ENCODE measurements at regions of chr7 and their contacts with region 1.

Region 1: DNA sequence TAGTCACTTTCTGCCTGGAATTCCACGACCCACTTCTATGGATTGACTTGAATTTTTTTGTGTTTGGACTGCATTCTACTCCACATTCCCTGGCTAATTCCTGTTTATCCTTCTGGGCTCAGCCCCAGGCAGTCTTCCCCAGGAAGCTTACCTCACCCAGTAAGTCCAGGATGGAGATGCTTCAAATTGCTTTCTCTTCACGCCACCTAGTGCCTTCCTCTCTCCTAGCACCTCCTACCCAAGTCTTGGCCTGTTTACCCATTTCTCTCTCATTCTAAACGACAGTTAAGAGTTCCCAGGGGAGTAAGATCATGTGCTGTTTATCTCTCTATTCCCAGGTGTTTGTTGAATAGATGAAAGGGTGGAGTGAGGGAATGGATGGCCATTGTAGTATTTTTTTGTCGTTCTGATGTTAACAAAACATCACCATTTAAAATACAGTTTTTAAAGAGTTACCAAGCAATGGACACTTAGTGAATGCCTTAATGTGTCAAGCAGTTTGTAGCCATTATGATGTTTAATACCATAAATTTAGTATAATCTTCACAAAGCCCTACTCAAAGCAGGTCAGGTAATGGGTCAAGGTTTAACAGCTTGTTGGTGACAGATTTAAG is 45.5 kb upstream of the TARP start:
- ATAC-seq: peak; percentile 92 to 100 (median 99)
- H3K4me3 ChIP-seq: no peak overlapping the region
- H3K27ac ChIP-seq: no peak overlapping the region
- H3K4me1 ChIP-seq: peaks cover 0 to 17% of the 10 kb centered on the region in 2 donors

Region 2: DNA sequence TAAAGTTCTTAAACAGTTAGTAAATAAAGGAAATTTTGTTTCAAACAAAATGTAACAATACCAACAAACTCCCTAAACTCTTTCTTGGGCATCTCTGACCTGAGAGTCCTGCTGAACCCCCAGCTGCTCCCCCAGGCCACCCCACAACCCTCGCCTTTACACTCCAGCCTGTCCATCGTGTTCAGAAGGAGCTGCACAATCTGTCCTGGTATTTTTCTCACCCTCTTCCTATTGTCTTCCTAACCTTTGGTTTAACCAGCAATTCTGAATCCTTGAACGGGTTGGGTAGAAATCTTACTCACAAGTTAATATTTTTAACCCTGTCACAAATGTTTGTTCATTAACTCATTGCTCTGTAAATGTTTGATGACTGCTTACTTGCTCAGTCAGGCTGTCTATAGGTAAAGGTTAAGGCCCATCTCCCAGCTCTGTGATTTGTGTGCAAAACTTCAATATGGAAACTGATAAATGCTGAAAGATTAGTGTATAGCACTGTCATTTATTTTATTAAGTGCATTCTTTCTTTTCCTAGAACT is 419.1 kb before region 1 on chr7:
- in situ Hi-C with region 1: loop called in 2 of 9 experiments (anchors 25 kb)
- ATAC-seq: no peak
- H3K4me3 ChIP-seq: no peak overlapping the region
- H3K27ac ChIP-seq: no peak overlapping the region
- H3K4me1 ChIP-seq: no peaks in the 10 kb centered on the region

Region 3: DNA sequence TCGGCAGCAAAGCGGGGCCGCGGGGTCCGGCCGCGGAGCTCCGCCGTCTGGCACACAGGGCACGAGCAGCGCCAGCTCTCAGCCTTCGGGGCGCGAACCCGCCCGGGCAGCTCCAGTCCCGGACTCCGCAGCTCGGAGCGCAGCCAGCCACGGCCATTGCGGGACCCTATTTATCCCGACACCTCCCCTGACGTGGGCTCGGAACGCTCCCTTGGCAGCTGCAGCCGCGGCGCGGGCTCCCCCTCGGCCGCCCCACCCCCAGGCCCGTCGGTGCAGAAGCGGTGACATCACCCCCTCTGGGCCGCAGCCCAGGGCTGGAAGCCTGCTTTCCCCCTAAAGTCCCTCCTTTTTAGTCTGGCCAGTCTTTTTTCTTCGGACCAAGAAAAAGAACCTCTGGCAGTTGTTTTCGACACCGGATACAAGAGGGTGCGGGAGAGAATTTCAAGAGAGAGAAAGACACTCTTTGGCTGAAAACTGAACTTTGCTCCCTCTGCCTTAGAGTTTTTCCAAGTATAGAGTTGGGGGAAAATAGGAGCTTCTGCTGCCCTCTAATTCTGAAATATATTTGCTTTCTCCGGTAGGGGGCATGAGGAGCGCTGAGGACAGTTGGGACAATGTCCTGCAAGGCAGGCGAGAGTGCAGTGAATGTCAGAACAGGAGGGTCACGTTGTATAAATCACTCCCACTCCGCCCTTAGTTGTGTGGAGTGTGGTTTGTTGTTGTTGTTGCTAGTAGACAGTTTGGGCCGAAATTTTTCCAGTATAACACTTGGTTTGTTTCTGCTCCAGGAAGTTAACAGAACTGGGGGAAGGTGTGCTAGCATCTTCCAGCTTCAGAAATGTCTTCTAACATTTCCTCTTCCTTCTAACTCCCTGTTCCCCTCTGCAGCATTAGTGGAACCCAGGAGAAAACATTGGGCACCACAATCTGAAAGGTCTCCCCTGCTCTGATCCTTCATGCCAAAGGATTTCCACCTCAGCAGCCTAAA is 401.9 kb before region 1 on chr7 and contains the start of gene SFRP4:
- in situ Hi-C with region 1: loop called in 1 of 9 experiments (anchors 25 kb)
- ATAC-seq: peak; percentile 68 to 83 (median 78)
- H3K4me3 ChIP-seq: peak within 1 kb of the TSS; percentile 29 to 46 (median 39)
- H3K27ac ChIP-seq: no peak within 1 kb of the TSS
- H3K4me1 ChIP-seq: peaks cover 0 to 15% of the 10 kb centered on the region in 2 donors
- total RNA-seq, gene SFRP4: 0.08 to 95.4 (median 0.81) TPM in 7 of 8 experiments, not detected in the other

Region 4: GRCh38 chr7:38107486-38107893 is 211.4 kb before region 1 on chr7:
- in situ Hi-C with region 1: loop called in 3 of 9 experiments (anchors 10 to 25 kb)
- ATAC-seq: peak; percentile 69 to 88 (median 78)
- H3K4me3 ChIP-seq: no peak overlapping the region
- H3K27ac ChIP-seq: no peak overlapping the region
- H3K4me1 ChIP-seq: no peaks in the 10 kb centered on the region

Region 5: DNA sequence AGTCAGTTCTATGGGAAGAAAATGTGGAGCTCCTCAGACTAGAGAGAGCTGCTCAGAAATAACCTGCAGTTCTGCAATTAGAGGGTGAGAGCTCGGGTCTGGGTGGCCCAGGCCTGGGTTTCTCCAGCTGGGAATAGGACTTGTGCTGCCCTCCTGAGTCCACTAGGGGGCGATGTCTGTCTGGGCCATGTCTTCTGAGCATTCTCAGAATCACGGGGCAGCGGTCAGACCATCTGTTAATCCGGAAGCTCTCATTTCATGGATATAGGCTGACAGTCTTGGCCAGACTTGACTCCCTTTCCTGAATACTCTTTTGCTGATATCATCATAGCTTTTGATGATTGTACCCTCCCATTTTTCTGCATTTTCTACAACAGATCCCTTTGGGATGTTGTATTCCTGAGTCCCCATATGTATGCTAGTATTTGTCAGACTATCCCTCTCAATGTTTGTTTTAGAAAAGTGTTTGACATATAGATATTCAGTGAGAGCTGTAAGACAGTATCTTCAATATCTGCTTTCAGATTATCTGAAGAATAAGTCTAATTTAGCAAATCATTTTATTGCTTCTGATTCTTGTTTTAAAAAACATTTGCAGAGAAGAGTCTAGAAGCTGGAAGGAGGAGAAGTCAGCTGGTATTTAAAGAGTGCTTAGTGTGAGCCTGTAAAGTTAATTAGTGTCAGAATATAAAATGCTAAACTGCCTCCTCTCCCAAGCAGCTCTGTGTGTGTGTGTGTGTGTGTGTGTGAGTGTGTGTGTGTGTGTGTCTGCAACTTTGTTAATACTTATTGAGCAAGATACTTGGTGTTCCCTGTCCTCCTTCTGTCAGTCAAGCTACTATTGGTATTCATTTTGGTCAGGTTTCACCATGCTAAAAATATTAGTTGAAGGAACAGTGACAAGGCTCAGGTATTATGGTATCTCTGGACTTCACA is 102.9 kb before region 1 on chr7:
- in situ Hi-C with region 1: loop called in 1 of 9 experiments (anchors 25 kb)
- ATAC-seq: peak; percentile 91 to 98 (median 94)
- H3K4me3 ChIP-seq: no peak overlapping the region
- H3K27ac ChIP-seq: no peak overlapping the region
- H3K4me1 ChIP-seq: peaks cover 0 to 3% of the 10 kb centered on the region in 2 donors

Measured in motor neuron (in vitro differentiated cells).